ENCODE measurements at regions of chr19 and their contacts with region 1.

Region 1: DNA sequence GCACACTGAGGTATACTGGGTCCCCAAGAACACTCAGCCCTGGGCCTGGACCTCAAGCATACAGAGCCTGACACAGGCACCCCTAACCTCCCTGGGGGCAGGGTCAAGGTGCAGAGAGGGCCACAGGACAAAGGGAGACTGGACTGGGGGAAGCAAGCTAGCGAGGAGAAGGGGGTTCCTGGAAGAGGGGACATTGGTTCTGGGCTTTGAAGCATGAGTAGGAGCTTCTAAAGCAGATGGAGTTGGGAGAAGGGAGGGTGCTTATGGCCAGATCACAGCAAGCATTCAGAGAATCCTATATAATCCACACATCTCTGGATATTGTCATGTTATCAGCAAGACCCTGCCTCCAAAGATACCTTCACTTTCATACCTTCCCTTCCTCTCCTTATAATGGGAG is 3.2 kb downstream of the CIB3 start:
- DNase-seq: no peak
- ATAC-seq: no peak
- H3K4me3 ChIP-seq: no peak overlapping the region
- H3K27ac ChIP-seq: no peak overlapping the region
- H3K4me1 ChIP-seq: peaks cover 0 to 10% (median 0%) of the 10 kb centered on the region in 9 donors
- H3K27me3 ChIP-seq: peaks cover 0 to 13% (median 0%) of the 10 kb centered on the region in 7 donors
- CTCF ChIP-seq: no peak

Region 2: DNA sequence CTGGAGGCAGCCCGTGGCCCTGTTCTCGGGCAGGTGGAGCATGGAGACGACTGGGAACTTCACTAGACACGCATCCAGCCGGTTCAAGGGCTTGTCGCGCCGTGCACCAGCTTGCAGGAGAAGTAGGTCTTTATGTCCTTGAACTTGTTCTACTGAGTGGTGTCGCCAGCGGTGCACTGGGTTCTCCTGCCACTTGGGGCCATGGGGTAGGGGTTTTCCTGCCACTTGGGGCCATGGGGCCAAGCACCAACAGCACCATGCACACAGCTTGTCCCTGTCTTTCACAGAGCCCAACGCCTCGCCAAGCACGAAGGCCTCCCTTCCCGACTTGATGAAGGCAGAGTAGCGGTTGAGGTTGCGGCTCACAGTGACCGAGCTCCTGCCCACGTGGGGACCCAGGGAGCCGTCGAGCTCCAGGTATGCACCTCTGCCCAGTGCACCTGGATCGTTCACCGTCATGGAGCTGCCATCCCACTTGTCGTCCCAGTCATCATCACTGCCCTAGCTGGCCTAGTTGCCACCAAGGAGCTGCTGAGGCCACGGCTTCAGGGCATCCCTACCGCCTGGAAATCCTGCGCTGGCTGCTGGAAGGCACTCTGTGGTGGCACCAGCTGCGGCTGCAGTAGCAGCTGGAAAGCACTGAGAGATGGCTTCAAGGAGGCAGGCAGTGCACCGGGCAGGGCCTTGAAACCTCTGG is 134.4 kb before region 1 on chr19:
- intact Hi-C with region 1: loop called in 2 of 10 experiments (anchors 5 kb)
- DNase-seq: no peak
- ATAC-seq: no peak
- H3K4me3 ChIP-seq: no peak overlapping the region
- H3K27ac ChIP-seq: no peak overlapping the region
- H3K4me1 ChIP-seq: peaks cover 0 to 5% (median 2%) of the 10 kb centered on the region in 9 donors
- H3K27me3 ChIP-seq: peaks cover 0 to 6% (median 0%) of the 10 kb centered on the region in 7 donors
- CTCF ChIP-seq: no peak

Region 3: DNA sequence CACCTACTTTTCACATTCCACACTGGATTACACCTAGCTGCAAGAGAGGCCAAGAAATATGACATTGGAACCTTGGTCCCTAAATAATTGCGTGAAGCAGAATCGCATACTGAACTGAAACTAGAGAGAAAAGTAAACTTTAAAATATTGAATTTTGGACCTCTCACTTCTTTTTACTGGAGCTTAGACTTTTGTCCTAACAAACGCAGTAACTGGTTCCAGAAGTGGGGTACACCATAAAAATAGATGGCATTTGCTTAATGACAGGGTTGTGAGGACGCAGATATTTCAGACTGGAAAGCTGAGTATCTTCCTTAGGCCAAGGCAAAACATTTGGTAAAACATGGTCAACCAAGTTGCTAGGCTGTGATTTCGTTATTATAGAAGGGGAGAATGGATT is 113.1 kb before region 1 on chr19:
- intact Hi-C with region 1: loop called in 1 of 10 experiments (anchors 5 kb)
- DNase-seq: no peak
- ATAC-seq: no peak
- H3K4me3 ChIP-seq: no peak overlapping the region
- H3K27ac ChIP-seq: no peak overlapping the region
- H3K4me1 ChIP-seq: no peaks in the 10 kb centered on the region
- H3K27me3 ChIP-seq: peaks cover 0 to 6% (median 0%) of the 10 kb centered on the region in 7 donors
- CTCF ChIP-seq: no peak

Region 4: DNA sequence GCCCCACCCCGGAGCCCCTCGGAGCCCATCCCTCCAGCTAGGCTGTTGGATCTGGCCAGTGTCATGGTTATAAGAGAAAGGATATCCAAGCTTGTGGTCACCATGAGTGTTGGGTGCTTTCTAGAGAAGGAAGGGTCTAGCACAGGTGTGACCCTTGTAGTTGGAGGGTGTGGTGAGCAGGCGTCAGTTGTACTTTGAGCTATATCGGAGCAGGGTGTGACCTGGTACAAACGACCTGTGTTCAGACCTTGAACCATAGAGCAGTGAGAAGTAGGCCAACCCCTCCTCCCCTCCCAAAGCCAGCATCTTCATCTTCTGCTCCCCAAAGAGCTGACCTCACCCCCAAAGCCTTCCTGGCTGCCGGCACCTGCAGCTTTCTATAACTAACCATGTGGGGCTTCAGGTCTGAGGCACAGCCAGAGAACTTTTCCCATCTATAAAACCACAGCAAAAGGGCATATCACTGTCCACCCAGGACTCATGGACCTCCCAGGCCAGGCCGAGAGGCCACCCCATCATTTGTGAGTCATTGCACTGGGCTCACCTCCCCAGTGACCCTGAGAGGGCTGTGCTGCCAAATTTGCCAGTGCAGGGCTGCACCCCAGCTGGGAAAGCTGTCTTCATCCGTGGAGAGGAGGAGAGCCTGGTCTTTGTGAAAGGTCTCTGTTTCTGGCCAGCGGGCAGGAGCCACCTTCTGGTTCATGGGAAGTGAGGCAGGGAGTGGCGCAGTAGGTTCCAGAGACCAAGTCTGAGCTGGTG is 44.2 kb before region 1 on chr19:
- intact Hi-C with region 1: no loop called
- DNase-seq: no peak
- ATAC-seq: no peak
- H3K4me3 ChIP-seq: no peak overlapping the region
- H3K27ac ChIP-seq: no peak overlapping the region
- H3K4me1 ChIP-seq: no peaks in the 10 kb centered on the region
- H3K27me3 ChIP-seq: no peaks in the 10 kb centered on the region
- CTCF ChIP-seq: no peak